A549 (cell line): ENCODE measurements at regions of chr14 and their contacts with region 1.

Region 1: GRCh38 chr14:103546652-103547454 is 15.6 kb downstream of the BAG5 start:
- DNase-seq: peak; percentile 62 to 83
- ATAC-seq: peak; percentile 42 to 81
- H3K4me3 ChIP-seq: no peak overlapping the region
- H3K27ac ChIP-seq: no peak overlapping the region
- H3K4me1 ChIP-seq: peaks cover 18% of the 10 kb centered on the region
- CTCF ChIP-seq: peak; percentile 94
- EP300 ChIP-seq: no peak
- POLR2A ChIP-seq: no peak
- RAD21 ChIP-seq: peak; percentile 96 to 97

Region 2: DNA sequence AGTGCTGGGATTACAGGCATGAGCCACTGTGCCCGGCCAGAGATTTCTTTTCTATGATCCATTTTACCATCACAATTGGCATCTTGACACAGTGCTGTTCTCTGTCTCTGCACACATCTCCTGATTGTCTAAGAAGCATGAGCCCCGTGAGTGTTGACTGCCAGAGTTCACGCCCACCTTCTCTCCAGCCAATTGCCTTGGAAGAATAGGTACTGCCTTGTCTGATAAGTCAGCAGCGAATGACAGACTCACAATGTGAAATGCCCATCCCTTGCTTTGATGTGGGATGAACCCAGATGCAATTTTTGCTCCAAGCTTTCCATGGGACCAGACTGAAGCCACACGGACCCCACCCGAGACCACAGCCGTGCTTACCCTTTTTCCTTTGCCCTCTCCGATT is 193.5 kb before region 1 on chr14:
- CTCF ChIA-PET with region 1: no interaction called
- POLR2A ChIA-PET with region 1: no interaction called
- DNase-seq: no peak
- ATAC-seq: no peak
- H3K4me3 ChIP-seq: no peak overlapping the region
- H3K27ac ChIP-seq: no peak overlapping the region
- H3K4me1 ChIP-seq: peaks cover 9% of the 10 kb centered on the region; the same call in 2 of the 3 replicates
- CTCF ChIP-seq: no peak
- EP300 ChIP-seq: no peak
- POLR2A ChIP-seq: no peak
- RAD21 ChIP-seq: no peak

Region 3: GRCh38 chr14:103500148-103500990 is 46.5 kb before region 1 on chr14:
- CTCF ChIA-PET with region 1: interaction called, 27 read pairs
- POLR2A ChIA-PET with region 1: no interaction called
- DNase-seq: peak in 1 of 2 experiments; percentile 81
- ATAC-seq: peak; percentile 97
- H3K4me3 ChIP-seq: no peak overlapping the region
- H3K27ac ChIP-seq: 0 out of 6 replicates have a peak overlapping the region, but pooled peaks of 1 of the 2 experiments have one; percentile 15
- H3K4me1 ChIP-seq: 0 out of 3 replicates have a peak, but pooled peaks cover 2% of the 10 kb centered on the region
- CTCF ChIP-seq: peak; percentile 91
- EP300 ChIP-seq: no peak
- POLR2A ChIP-seq: no peak
- RAD21 ChIP-seq: peak; percentile 55 to 63

Region 4: DNA sequence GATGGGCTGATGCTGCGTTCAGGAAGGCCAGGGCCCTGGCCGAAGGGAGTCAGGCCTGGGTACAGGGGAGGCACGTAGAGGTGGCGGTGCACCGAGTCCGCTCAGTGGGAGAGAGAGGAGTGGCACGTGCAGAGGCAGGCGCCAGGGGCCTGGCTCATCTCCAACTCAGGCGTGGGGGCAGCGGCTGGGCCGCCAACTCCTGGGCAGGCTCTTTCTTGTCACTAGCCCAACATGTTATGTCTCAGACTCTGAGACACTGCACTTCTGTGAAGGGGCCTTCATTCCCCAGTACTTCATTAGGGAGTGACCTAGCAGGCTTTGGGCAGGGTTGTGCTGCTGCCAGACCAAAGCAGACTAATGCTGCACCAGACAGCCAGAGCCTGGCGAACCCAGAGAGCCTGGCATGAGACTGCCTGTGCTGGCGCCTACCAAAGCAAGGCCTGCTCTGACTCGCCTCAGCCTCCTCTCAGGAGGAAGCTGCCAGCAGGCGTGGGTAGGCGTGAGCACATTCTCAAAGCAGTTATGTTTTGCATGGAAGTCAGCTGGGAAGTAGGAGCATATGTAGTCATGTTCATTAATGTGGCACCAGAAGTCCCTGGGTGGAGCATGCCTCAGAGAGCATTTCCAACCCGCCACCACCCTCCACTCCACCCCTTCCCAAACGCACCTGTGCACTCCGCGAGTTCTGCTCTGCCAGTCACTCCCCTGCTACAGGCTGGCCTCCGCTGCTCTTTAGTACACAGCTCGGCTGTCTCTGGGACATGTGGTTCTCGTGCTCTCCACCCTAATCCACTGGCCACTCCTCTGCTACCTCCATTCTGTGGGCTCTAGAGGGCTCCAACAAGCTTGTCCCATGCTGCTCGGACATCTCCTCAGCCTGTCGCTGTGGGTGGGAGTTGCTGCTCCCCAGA is 33.9 kb before region 1 on chr14:
- CTCF ChIA-PET with region 1: interaction called, 489 read pairs
- POLR2A ChIA-PET with region 1: interaction called, 4 read pairs
- DNase-seq: no peak
- ATAC-seq: peak; percentile 12 to 15; a peak in 3 of 6 replicates
- H3K4me3 ChIP-seq: no peak overlapping the region
- H3K27ac ChIP-seq: no peak overlapping the region
- H3K4me1 ChIP-seq: no peaks in the 10 kb centered on the region
- CTCF ChIP-seq: no peak
- EP300 ChIP-seq: no peak
- POLR2A ChIP-seq: no peak
- RAD21 ChIP-seq: no peak

Region 5: DNA sequence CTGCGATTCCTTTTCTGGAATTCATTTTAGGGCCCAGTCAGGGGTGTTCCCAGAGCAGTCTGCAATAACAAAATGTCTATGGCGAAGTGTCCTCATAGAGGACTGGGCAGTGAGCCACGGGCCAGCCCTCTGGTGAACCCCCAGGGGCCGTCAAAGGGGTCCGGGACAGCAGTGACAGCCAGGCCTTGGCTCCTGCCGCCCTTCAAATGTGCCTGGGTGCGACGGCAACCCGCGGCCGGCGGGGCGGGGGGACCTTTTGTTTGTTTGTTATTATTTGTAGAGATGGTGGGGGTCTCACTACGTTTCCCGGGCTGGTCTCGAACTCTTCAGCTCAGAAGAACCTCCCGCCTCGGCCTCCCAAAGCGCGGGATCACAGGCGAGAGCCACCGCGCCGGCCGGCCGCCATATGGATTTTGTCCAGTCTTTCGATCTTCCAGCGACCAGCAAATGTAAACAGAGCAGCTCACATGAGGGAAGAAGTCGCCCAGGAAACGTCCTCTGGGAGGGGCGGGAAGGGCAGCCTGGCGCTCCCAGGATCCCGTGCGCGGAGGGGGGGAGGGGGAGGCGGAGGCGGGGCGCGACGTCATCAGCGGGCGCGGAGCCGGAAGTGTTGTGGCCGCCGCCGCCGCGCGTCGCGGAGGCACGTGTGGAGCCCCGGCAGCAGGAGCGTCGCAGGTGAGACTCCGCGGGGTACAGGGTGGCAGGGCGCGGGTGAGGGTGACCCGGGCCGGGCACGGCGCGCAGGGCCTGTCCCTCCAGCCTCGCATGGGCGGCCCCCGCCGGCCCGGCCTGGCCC is 18.1 kb before region 1 on chr14 and contains the start of gene TRMT61A:
- CTCF ChIA-PET with region 1: interaction called, 489 read pairs
- POLR2A ChIA-PET with region 1: interaction called, 22 read pairs
- DNase-seq: peak; percentile 89 to 95
- ATAC-seq: peak; percentile 62 to 79
- H3K4me3 ChIP-seq: peak within 1 kb of the TSS; percentile 100
- H3K27ac ChIP-seq: peak within 1 kb of the TSS; percentile 94 to 97
- H3K4me1 ChIP-seq: peaks cover 50% of the 10 kb centered on the region
- CTCF ChIP-seq: no peak
- EP300 ChIP-seq: no peak
- POLR2A ChIP-seq: peak; percentile 82
- RAD21 ChIP-seq: no peak
- polyA plus RNA-seq, gene TRMT61A: 8.3 TPM in 2 replicates

Region 6: GRCh38 chr14:103562429-103563225 is 15.8 kb after region 1 on chr14 and contains the starts of genes BAG5 and COA8:
- CTCF ChIA-PET with region 1: interaction called, 100 read pairs
- POLR2A ChIA-PET with region 1: no interaction called
- DNase-seq: peak; percentile 84 to 89
- ATAC-seq: peak; percentile 88 to 89
- H3K4me3 ChIP-seq: peak within 1 kb of the TSS; percentile 99
- H3K27ac ChIP-seq: peak within 1 kb of the TSS; percentile 95 to 98
- H3K4me1 ChIP-seq: peaks cover 37% of the 10 kb centered on the region
- CTCF ChIP-seq: no peak
- EP300 ChIP-seq: no peak
- POLR2A ChIP-seq: peak; percentile 71
- RAD21 ChIP-seq: no peak
- polyA plus RNA-seq, gene BAG5: 20.4 and 20.8 TPM in 2 replicates
- polyA plus RNA-seq, gene COA8: 23.2 and 29.8 TPM in 2 replicates